Activated CD4-positive, alpha-beta memory T cell treated with anti-CD3 and anti-CD28 coated beads for 36 hours (primary cell): ENCODE measurements at regions of chr14 and their contacts with region 1.

Region 1: GRCh38 chr14:20413045-20413799 is at the start of gene TEP1:
- DNase-seq: peak; percentile 87
- H3K4me3 Mint-ChIP-seq: peak within 1 kb of the TSS; percentile 93
- H3K27ac Mint-ChIP-seq: peak within 1 kb of the TSS; percentile 96
- H3K4me1 Mint-ChIP-seq: peaks cover 40% of the 10 kb centered on the region
- H3K27me3 Mint-ChIP-seq: no peaks in the 10 kb centered on the region
- total RNA-seq, gene TEP1: 47.1 to 49.3 TPM

Region 2: DNA sequence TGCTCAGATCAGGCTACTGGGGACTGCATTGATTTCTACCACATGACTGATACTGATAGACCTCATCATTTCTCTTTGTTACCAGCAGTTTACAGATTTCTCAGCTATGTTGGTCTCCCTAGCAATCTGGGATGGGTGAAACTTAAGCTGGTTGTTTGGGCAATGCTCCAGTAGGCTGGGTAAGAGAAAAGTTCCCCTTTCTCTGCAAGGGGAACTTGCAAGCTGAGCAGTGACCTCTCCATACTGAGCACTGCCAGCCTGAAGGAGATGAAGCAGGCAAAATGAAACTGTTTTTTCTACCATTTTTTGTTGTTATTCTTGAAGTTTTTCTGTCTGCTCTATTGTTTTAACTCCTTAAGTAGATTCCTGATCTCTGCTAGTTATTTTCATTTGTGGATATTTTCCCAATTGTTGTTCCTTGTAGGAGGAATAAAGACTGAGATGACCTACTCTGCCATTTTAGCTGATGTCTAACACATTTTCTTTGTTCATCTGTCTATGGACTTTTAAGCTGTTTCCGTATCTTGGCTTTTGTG is 641.3 kb before region 1 on chr14:
- CTCF ChIA-PET with region 1: no interaction called
- POLR2A ChIA-PET with region 1: no interaction called
- intact Hi-C with region 1: no loop called
- DNase-seq: no peak
- H3K4me3 Mint-ChIP-seq: no peak overlapping the region
- H3K27ac Mint-ChIP-seq: no peak overlapping the region
- H3K4me1 Mint-ChIP-seq: no peaks in the 10 kb centered on the region
- H3K27me3 Mint-ChIP-seq: no peaks in the 10 kb centered on the region

Region 3: GRCh38 chr14:20343092-20343861 is 69.9 kb before region 1 on chr14 and contains the start of gene PARP2:
- CTCF ChIA-PET with region 1: interaction called, 5 read pairs
- POLR2A ChIA-PET with region 1: interaction called, 16 read pairs
- intact Hi-C with region 1: loop called (anchors 1 kb)
- DNase-seq: peak; percentile 97
- H3K4me3 Mint-ChIP-seq: peak within 1 kb of the TSS; percentile 93
- H3K27ac Mint-ChIP-seq: peak within 1 kb of the TSS; percentile 94
- H3K4me1 Mint-ChIP-seq: peaks cover 19% of the 10 kb centered on the region
- H3K27me3 Mint-ChIP-seq: peaks cover 3% of the 10 kb centered on the region
- total RNA-seq, gene PARP2: 46.3 to 47.3 TPM

Region 4: DNA sequence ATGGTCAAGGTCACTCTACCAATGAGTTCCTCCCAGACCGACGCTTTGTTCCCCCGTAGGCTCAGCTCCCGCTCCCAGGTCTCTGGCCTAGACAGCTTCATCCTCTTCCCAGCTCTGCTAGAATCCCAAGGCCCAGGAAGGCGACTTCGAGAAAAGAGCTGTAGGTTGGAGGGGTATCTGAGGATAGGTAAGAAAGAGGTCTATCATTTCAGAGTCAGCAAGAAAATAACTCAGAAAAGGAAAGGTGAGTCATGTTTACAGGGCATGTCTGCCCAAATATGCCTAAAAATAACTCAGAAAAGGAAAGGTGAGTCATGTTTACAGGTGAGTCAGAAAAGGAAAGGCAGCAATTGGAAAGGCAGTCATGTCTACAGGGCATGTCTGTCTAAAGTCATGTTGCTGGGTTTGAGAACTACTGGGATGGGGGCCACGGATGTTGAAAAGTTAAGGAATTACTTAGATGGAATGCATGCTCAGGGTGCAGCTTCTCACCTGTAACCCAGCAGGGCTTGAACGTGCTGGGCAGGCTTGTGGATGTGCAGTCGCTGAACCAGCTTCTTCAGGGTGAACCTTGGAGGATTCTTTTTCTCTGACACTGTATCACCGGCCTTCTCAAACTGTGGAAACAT is 12.1 kb before region 1 on chr14:
- CTCF ChIA-PET with region 1: interaction called, 10 read pairs
- POLR2A ChIA-PET with region 1: interaction called, 5 read pairs
- intact Hi-C with region 1: loop called (anchors 1 kb)
- DNase-seq: peak; percentile 43
- H3K4me3 Mint-ChIP-seq: peak overlapping the region; percentile 52
- H3K27ac Mint-ChIP-seq: peak overlapping the region; percentile 95
- H3K4me1 Mint-ChIP-seq: peaks cover 30% of the 10 kb centered on the region
- H3K27me3 Mint-ChIP-seq: no peaks in the 10 kb centered on the region

Region 5: GRCh38 chr14:20446889-20447288 is 33.7 kb after region 1 on chr14:
- CTCF ChIA-PET with region 1: interaction called, 10 read pairs
- POLR2A ChIA-PET with region 1: no interaction called
- intact Hi-C with region 1: no loop called
- DNase-seq: no peak
- H3K4me3 Mint-ChIP-seq: no peak overlapping the region
- H3K27ac Mint-ChIP-seq: peak overlapping the region; percentile 52
- H3K4me1 Mint-ChIP-seq: no peaks in the 10 kb centered on the region
- H3K27me3 Mint-ChIP-seq: no peaks in the 10 kb centered on the region

Region 6: DNA sequence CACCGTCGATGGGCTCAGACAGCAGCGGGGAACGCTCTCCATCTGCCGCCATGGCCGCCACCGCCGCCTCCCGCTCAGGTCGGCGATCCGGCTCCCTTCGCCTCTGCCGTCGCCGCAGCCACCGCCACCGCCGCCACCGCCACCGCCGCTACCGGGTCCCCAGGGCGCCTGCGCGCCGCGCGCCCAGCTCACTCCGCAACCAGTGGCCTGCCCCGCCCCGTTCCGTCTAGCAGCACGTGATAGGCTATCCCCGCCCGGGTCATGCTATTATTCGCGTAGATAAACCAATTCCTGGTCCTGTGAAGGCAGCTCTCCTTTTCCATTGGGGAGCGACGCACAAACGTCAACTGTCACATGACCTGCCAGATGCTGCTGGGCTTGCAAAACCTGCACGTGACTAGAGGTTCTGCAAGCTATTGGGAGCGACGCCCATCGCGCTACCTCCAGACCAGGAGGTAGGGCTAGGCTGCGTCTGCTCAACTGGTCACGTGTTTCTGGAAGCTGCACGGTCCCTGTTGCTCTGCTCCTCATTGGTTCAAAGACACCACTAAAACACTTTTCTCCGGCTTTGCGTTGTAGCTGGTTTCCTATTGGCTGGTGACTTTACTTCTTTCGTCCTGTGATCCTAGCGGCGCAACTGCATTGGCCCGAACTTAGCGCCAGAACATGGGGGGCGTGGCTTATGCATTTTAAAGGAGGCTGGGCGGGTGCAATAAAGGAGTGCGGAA is 48.2 kb after region 1 on chr14 and contains the start of gene PIP4P1:
- CTCF ChIA-PET with region 1: interaction called, 29 read pairs
- POLR2A ChIA-PET with region 1: interaction called, 16 read pairs
- intact Hi-C with region 1: no loop called
- DNase-seq: peak; percentile 99
- H3K4me3 Mint-ChIP-seq: peak within 1 kb of the TSS; percentile 91
- H3K27ac Mint-ChIP-seq: peak within 1 kb of the TSS; percentile 93
- H3K4me1 Mint-ChIP-seq: peaks cover 33% of the 10 kb centered on the region
- H3K27me3 Mint-ChIP-seq: no peaks in the 10 kb centered on the region
- total RNA-seq, gene PIP4P1: 31.1 to 35.2 TPM

Region 7: GRCh38 chr14:20530771-20531571 is 117.7 kb after region 1 on chr14:
- CTCF ChIA-PET with region 1: no interaction called
- POLR2A ChIA-PET with region 1: no interaction called
- intact Hi-C with region 1: loop called (anchors 5 kb)
- DNase-seq: peak; percentile 82
- H3K4me3 Mint-ChIP-seq: peak overlapping the region; percentile 47
- H3K27ac Mint-ChIP-seq: no peak overlapping the region
- H3K4me1 Mint-ChIP-seq: peaks cover 8% of the 10 kb centered on the region
- H3K27me3 Mint-ChIP-seq: peaks cover 2% of the 10 kb centered on the region

Region 8: DNA sequence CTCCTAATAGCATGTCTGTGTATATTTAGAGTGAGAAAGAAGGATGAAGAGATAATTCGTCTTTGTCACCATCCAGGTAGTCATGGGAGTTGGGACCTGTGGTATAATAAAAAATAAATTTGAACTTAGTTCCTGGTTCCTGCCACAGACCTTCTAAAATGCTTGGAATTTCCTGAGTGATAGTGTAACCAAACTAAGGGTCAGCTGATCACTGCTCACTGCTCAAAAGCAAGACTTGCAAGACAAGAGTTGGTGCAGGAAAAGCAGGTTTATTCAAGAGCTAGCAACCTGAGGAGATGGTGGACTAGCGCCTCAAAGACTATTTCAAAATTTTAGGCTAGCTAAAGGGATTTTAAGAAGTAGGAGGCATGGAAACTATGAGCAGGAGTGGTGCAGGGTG is 294.4 kb after region 1 on chr14:
- CTCF ChIA-PET with region 1: no interaction called
- POLR2A ChIA-PET with region 1: no interaction called
- intact Hi-C with region 1: no loop called
- DNase-seq: no peak
- H3K4me3 Mint-ChIP-seq: no peak overlapping the region
- H3K27ac Mint-ChIP-seq: no peak overlapping the region
- H3K4me1 Mint-ChIP-seq: no peaks in the 10 kb centered on the region
- H3K27me3 Mint-ChIP-seq: no peaks in the 10 kb centered on the region